ENCODE measurements at regions of chr2 and their contacts with region 1.

Region 1: DNA sequence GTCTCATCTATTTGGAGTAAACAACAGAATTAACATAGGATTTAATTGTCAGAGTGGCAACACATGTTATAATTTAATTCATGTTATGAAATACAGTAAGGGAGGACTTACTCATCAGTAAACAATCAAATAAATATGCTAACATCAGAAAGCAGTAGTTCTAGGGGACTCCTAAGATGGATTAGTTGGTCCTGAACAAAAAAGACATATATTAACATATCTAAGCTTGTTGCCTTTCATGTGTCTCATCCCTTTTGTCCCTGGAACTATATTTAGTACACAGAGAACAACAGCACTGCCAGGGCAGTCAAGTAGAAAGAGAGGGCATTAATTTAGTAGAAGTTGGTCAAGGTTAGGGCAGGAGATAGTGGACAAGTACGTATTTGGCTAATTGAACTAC is 117.8 kb upstream of the FZD5 start:
- DNase-seq: no peak
- CTCF ChIP-seq: no peak

Region 2: DNA sequence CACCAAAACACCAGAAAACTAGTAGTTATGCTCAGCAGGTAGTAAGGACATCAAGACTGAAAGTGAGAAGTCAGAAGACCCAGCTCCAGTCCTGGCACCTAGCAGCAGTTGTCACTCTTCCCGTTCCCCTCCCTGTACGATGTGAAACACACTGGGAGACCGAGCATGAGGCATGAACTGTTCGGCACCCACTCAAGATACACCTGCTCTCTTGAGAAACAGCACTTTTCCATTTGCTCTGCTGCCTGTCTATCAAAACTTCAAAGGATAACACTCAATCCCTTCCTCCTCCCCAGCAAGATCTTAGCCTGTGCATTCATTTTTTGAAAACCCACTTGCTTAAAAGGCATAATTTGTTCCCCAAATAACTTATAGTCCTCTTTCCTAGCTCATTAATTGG is 13.9 kb after region 1 on chr2:
- CTCF ChIA-PET with region 1: interaction called, 13 read pairs
- POLR2A ChIA-PET with region 1: no interaction called
- DNase-seq: no peak
- CTCF ChIP-seq: no peak

Measured in GM10248 (cell line).